Gastrocnemius medialis (tissue), 4 donors: ENCODE measurements at regions of chrX and their contacts with region 1.

Region 1: DNA sequence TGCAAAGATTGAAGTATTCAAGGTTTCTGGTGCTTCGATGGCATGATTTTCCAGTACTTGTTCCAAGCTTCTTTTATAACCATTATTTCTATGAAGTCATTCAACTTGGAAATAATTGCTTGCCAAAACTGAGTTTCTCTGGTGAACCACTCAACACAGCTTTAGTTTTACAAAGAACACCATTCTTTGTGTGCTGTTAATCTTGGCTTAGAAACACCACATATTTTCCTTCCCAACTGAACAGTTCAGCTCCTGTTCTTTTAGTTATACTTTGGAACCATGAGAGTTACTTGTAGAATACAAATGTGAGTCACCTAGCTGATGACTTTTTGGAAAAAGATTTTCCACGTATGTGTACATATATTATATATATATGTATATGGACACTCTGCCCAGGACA is 32.7 kb downstream of the TMEM47 start:
- DNase-seq: no peak
- ATAC-seq: no peak
- H3K4me3 ChIP-seq: no peak overlapping the region
- H3K27ac ChIP-seq: no peak overlapping the region
- H3K4me1 ChIP-seq: peaks cover 0 to 5% of the 10 kb centered on the region in 2 donors
- H3K27me3 ChIP-seq: no peaks in the 10 kb centered on the region
- CTCF ChIP-seq: no peak
- POLR2A ChIP-seq: no peak

Region 2: GRCh38 chrX:34716302-34716701 is 91.9 kb after region 1 on chrX:
- in situ Hi-C with region 1: loop called in 1 of 4 experiments (anchors 25 kb)
- intact Hi-C with region 1: no loop called
- DNase-seq: no peak
- ATAC-seq: no peak
- H3K4me3 ChIP-seq: no peak overlapping the region
- H3K27ac ChIP-seq: no peak overlapping the region
- H3K4me1 ChIP-seq: no peaks in the 10 kb centered on the region
- H3K27me3 ChIP-seq: no peaks in the 10 kb centered on the region
- CTCF ChIP-seq: no peak
- POLR2A ChIP-seq: no peak